Ovary (tissue), 10 donors: ENCODE measurements at regions of chrX and their contacts with region 1.

Region 1: GRCh38 chrX:43750248-43750676 is 94.2 kb downstream of the MAOA start:
- DNase-seq: peak in 4 of 5 donors; percentile 24 to 58 (median 38)
- H3K4me3 ChIP-seq: no peak overlapping the region
- H3K27ac ChIP-seq: no peak overlapping the region
- H3K4me1 ChIP-seq: no peaks in the 10 kb centered on the region
- H3K27me3 ChIP-seq: no peaks in the 10 kb centered on the region
- CTCF ChIP-seq: peak; percentile 16 to 56 (median 48)
- EP300 ChIP-seq: no peak
- POLR2A ChIP-seq: no peak

Region 2: DNA sequence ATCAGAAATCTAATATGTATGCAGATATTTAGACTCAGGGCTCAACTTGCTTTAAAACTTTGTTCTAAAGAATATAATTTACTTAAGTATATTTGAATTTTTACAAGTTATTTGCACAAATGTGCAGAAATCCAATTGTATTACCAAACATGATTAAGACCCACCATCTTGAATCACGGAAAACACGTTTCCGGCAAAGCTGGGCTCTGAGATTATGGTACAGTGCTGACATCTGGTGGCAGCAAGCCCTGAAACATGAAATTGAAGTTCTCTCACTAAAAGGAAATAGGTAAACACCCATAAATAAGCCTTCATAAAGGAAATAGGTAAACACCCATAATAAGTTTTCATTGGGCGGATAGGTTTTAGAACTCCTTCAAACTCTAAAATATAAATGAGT is 192.5 kb before region 1 on chrX:
- intact Hi-C with region 1: loop called (anchors 5 kb)
- DNase-seq: peak; percentile 14 to 57 (median 53)
- H3K4me3 ChIP-seq: no peak overlapping the region
- H3K27ac ChIP-seq: no peak overlapping the region
- H3K4me1 ChIP-seq: no peaks in the 10 kb centered on the region
- H3K27me3 ChIP-seq: no peaks in the 10 kb centered on the region
- CTCF ChIP-seq: peak in 1 of 3 donors; percentile 31
- EP300 ChIP-seq: no peak
- POLR2A ChIP-seq: no peak

Region 3: GRCh38 chrX:43975796-43976195 is 225.5 kb after region 1 on chrX:
- intact Hi-C with region 1: no loop called
- DNase-seq: no peak
- H3K4me3 ChIP-seq: no peak overlapping the region
- H3K27ac ChIP-seq: no peak overlapping the region
- H3K4me1 ChIP-seq: no peaks in the 10 kb centered on the region
- H3K27me3 ChIP-seq: no peaks in the 10 kb centered on the region
- CTCF ChIP-seq: no peak
- EP300 ChIP-seq: no peak
- POLR2A ChIP-seq: no peak